Naive thymus-derived CD8-positive, alpha-beta T cell (primary cell): ENCODE measurements at regions of chr22 and their contacts with region 1.

Region 1: DNA sequence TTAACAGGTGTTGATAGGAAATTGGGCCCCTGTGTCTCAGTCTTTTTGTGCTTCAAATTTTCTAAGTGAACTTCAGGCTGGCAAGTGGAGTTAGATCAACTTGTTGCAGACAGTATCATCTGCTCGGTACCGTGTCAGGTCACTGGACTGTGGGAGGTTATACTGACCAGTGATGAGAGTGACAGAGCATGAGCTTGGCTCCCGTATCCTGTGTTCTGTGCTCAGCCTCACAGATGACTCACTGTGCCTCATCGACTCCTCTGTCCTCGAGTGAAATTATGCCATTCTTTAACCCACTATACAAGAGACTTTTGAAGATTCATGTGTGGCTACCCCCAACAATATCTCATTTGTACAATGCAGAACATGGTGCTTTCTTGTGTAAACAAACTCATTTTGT is 7.9 kb downstream of the GRAP2 start:
- DNase-seq: peak in 1 of 10 donors; percentile 27
- ATAC-seq: peak; percentile 18 to 49
- H3K4me3 Mint-ChIP-seq: peak overlapping the region; percentile 79 to 99 (median 94)
- H3K27ac Mint-ChIP-seq: peak overlapping the region in 8 of 10 donors; percentile 94 to 99 (median 96)
- H3K4me1 Mint-ChIP-seq: peaks cover 52 to 86% (median 70%) of the 10 kb centered on the region in 4 donors
- H3K27me3 Mint-ChIP-seq: no peaks in the 10 kb centered on the region

Region 2: GRCh38 chr22:39927544-39927943 is 18.8 kb after region 1 on chr22:
- POLR2A ChIA-PET with region 1: interaction called, 408 read pairs
- DNase-seq: no peak
- ATAC-seq: no peak
- H3K4me3 Mint-ChIP-seq: no peak overlapping the region
- H3K27ac Mint-ChIP-seq: no peak overlapping the region
- H3K4me1 Mint-ChIP-seq: peaks cover 31 to 54% (median 40%) of the 10 kb centered on the region in 4 donors
- H3K27me3 Mint-ChIP-seq: no peaks in the 10 kb centered on the region

Region 3: DNA sequence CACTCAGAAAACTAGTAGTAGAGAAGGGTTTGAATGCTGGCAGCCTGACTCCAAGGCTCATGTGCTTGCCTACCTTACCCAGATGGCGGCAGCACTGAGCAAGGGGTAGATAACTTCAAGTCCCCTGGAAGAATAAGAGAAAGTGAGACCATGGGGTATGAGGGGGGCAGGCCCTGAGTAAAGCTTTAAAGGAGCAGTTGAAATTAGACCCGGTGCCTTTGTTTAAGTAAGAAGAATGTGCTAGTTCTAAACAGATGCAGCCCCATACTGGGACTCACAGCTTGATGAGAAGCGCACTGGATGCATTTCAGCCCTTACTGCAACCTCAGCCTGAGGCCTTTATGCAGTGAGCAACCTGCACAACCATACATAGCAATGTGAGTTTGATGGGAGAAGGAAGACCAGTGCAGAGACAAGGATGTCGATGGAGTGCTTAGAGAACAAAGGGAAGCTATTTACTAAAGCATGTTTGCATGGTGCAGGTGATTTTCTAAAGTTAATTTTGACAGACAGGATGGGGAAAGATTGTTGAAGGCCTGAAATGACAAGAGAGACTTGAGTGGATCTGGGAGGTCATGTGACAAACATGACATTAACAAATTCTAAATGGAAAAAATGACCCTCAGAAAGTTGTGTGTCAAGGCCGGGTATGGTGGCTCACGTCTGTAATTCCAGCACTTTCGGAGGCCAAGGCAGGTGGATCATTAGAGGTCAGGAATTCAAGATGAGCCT is 24.3 kb after region 1 on chr22:
- POLR2A ChIA-PET with region 1: interaction called, 408 read pairs
- DNase-seq: peak; percentile 29 to 81 (median 64)
- ATAC-seq: peak; percentile 15 to 59
- H3K4me3 Mint-ChIP-seq: peak overlapping the region in 9 of 10 donors; percentile 68 to 94 (median 88)
- H3K27ac Mint-ChIP-seq: peak overlapping the region in 6 of 10 donors; percentile 95 to 99 (median 98)
- H3K4me1 Mint-ChIP-seq: peaks cover 43 to 67% (median 56%) of the 10 kb centered on the region in 4 donors
- H3K27me3 Mint-ChIP-seq: no peaks in the 10 kb centered on the region

Region 4: DNA sequence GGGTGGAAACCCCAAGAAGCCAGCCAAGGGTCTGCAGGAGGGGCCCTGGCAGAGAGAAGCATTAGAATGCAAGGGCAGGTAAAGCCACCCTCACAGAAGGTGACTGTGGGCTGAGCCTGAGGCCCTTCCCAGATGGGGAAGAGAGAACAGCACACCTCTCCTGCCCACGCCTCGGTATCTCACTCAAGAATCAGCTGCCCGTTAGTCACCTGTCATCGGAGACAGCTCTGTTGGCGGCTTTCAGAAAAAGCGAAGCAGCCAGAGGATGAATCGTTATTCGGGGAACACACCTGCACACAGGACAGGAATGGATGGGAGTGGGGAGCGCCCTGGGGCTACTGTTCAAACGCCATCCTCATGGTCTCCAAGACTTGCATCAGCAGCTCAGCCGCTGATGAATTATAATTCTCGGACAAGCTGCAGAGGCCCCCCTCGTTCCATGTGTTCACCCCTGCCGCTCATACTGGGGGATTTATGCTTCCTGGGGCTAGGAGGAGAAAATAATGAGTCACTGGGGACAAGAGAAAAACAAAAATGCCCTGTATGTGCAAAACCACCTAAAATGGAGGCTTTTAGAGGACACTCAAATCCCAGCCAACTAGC is 29.9 kb after region 1 on chr22:
- POLR2A ChIA-PET with region 1: interaction called, 116 read pairs
- DNase-seq: peak in 3 of 10 donors; percentile 24 to 48 (median 41)
- ATAC-seq: peak; percentile 5 to 15
- H3K4me3 Mint-ChIP-seq: peak overlapping the region in 9 of 10 donors; percentile 68 to 94 (median 88)
- H3K27ac Mint-ChIP-seq: peak overlapping the region in 6 of 10 donors; percentile 95 to 99 (median 98)
- H3K4me1 Mint-ChIP-seq: peaks cover 47 to 97% (median 94%) of the 10 kb centered on the region in 4 donors
- H3K27me3 Mint-ChIP-seq: no peaks in the 10 kb centered on the region

Region 5: GRCh38 chr22:39985383-39986035 is 76.8 kb after region 1 on chr22:
- POLR2A ChIA-PET with region 1: no interaction called
- DNase-seq: peak in 8 of 10 donors; percentile 16 to 67 (median 34)
- ATAC-seq: peak; percentile 69 to 79
- H3K4me3 Mint-ChIP-seq: peak overlapping the region in 9 of 10 donors; percentile 1 to 79 (median 46)
- H3K27ac Mint-ChIP-seq: peak overlapping the region; percentile 39 to 94 (median 81)
- H3K4me1 Mint-ChIP-seq: peaks cover 24 to 53% (median 34%) of the 10 kb centered on the region in 4 donors
- H3K27me3 Mint-ChIP-seq: peaks cover 0 to 6% (median 0%) of the 10 kb centered on the region in 5 donors